Activated CD8-positive, alpha-beta T cell treated with anti-CD3 and anti-CD28 coated beads, Interleukin-2, amount 10 ng/mL, durations not matched to agents 7 days and 5 days (primary cell): ENCODE measurements at regions of chr9 and their contacts with region 1.

Region 1: DNA sequence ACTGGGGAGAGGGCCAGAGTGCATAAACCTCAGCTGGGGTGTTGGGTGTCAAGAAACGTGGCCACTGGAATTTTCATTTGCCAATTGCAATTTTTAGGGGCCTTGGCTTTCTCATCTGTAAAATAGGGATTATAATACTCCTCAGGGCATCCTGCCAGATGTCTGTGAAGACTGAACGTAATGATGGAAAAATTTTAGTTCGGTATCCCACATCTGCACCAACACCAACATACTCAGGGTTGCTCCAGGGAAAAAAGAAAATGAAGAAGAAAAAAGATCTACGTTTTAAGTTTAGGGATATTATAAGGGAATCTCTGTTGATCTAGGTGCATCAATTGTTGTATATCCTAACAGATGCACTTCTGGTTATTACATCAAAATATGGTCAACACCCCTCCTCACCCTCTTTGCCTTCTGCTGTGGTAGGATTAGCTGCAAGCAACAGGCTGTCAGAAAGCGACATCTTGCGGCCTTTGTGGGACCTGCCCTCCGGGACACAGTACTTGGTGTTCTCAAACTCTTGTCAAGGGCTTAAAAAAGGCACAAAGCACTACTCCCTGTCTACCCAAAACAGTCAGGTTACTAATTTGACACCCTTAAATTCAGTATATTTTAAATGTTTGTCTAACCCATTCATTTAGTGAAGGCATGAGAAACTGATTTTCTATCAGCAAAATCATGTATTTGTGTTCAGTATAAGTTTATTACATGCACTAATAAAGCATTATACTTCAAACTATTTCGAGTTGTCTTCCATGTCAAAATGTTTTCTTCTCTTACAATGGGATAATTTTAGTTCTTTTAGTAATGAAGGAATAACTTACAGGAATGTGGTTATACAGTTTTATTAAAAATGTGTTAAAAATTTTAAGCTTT is 8.3 kb upstream of the TBC1D2 start:
- DNase-seq: peak; percentile 90
- ATAC-seq: peak; percentile 100
- H3K4me3 Mint-ChIP-seq: no peak overlapping the region
- H3K27ac Mint-ChIP-seq: no peak overlapping the region
- H3K4me1 Mint-ChIP-seq: no peaks in the 10 kb centered on the region
- H3K27me3 Mint-ChIP-seq: peaks cover 9% of the 10 kb centered on the region

Region 2: DNA sequence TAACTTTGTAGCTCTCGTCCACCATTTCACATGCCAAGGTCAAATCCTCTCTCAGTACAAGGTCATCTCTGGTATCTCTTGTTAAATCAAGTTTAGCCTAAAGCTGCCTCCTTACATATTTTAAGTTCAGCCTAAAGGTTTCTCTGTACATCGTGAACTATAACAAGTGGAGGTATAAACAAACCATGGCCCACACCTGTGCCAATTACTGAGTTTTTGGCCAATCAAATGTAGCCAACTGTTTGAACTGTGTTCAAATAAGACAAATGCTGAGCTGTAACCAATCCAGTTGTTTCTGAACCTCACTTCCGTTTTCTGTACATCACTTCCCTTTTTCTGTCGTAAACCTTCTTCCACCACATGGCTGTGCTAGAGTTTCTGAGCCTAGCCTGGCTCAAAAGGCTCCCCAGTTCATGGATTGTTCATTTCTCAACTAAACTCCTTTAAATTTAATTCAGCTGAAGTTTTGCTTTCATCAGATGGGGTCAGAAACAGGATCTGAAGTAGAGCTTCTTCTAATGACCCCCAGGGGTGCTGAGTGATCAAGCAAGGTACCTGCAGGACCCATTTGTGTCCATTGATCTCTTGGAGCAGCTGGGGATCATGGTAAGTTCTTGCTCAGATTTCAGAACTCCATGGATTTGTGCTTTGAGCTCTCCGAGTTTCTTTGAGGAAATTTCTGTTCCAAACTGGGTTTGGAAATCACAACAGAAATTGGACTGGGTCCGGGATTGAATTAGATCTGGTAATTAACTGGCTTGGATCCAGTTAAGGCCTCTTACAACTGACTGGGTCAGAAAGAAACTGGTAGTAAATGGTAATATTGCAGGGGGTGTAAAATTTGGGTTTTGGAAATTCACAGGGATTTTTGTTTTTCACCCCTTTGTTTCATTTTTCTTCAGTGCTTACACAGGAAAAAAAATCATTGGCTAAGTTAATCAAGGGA is 218.2 kb before region 1 on chr9:
- CTCF ChIA-PET with region 1: interaction called, 10 read pairs
- POLR2A ChIA-PET with region 1: no interaction called
- DNase-seq: peak; percentile 71
- ATAC-seq: peak; percentile 95
- H3K4me3 Mint-ChIP-seq: peak overlapping the region; percentile 84
- H3K27ac Mint-ChIP-seq: peak overlapping the region; percentile 93
- H3K4me1 Mint-ChIP-seq: peaks cover 42% of the 10 kb centered on the region
- H3K27me3 Mint-ChIP-seq: no peaks in the 10 kb centered on the region

Region 3: GRCh38 chr9:98207606-98208005 is 56.1 kb before region 1 on chr9:
- CTCF ChIA-PET with region 1: interaction called, 24 read pairs
- POLR2A ChIA-PET with region 1: no interaction called
- DNase-seq: no peak
- ATAC-seq: no peak
- H3K4me3 Mint-ChIP-seq: no peak overlapping the region
- H3K27ac Mint-ChIP-seq: no peak overlapping the region
- H3K4me1 Mint-ChIP-seq: peaks cover 2% of the 10 kb centered on the region
- H3K27me3 Mint-ChIP-seq: no peaks in the 10 kb centered on the region